ENCODE measurements at regions of chr2 and their contacts with region 1.

Region 1: DNA sequence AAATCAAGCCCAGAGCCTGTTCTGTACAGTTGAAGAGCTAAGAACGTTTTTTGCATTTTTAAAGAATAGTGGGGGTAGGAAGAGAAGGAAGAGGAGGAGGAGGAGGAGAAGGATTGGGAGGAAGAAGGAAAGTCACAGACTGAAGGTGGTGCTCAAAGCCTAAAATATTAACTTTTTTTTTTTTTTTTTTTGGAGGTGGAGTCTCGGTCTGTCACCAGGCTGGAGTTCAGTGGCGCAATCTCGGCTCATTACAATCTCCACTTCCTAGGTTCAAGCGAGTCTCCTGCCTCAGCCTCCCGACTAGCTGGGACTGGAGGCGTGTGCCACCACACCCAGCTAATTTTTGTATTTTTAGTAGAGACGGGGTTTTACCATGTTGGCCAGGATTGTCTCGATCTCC is 18.3 kb upstream of the KLHL29 start:
- DNase-seq: no peak
- ATAC-seq: peak; percentile 84
- H3K4me3 ChIP-seq: peak overlapping the region; percentile 32 to 43
- H3K27ac ChIP-seq: no peak overlapping the region
- H3K4me1 ChIP-seq: peaks cover 3 to 14% of the 10 kb centered on the region in 2 experiments; a peak in 3 of 4 replicates
- H3K27me3 ChIP-seq: peaks cover 19% of the 10 kb centered on the region; the same call in 1 of the 2 replicates
- CTCF ChIP-seq: peak; percentile 2 to 52 (median 28); a peak in 2 of 6 replicates
- POLR2A ChIP-seq: no peak
- RAD21 ChIP-seq: peak; percentile 74

Region 2: GRCh38 chr2:23028106-23028505 is 338.6 kb before region 1 on chr2:
- CTCF ChIA-PET with region 1: no interaction called
- POLR2A ChIA-PET with region 1: no interaction called
- RAD21 ChIA-PET with region 1: no interaction called
- intact Hi-C with region 1: no loop called
- DNase-seq: no peak
- ATAC-seq: no peak
- H3K4me3 ChIP-seq: no peak overlapping the region
- H3K27ac ChIP-seq: no peak overlapping the region
- H3K4me1 ChIP-seq: no peaks in the 10 kb centered on the region
- H3K27me3 ChIP-seq: peaks cover 14% of the 10 kb centered on the region; the same call in 1 of the 2 replicates
- CTCF ChIP-seq: no peak
- POLR2A ChIP-seq: no peak
- RAD21 ChIP-seq: no peak

Region 3: DNA sequence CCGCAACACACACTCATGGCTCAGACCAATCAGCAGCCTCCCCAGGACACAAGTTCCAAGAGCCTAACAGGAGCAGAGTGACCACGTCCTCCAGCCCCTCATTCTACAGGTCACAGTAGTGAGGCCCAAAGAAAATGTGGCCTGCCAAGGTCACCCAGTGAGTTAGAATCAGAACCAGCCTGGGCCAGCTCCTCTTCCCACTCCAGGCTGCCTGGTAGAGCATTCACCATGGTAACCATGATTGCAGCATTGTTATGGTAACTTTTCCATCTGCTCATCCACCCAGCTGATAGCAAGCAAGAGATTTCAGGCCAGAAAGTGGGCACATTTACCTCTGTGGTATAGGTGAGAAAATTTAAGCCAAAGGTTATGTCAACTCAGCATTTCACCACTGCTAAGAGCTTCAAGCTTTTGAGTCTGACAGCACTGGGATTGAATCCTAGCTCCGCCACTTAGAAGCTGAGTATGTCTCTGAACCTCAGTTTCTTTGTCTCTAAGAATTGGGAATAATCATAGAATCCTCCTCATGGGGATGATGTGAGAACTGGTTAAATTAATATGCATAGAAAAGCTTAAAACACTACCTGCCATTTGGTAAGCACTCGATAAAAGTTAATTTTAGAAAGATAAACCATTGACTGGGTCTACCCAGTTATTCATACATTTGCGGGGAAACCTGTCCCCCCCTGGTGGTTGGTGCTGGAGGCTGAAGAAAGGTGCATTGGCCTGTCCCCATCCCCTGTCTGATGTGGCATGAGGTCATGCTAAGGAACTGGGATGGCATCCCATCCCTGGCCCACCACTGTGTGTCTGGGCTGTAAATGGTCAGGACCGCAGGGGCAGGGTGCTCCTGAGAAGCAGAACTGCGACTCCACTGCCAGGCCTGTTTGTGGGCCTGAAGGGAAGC is 199.8 kb after region 1 on chr2:
- CTCF ChIA-PET with region 1: no interaction called
- POLR2A ChIA-PET with region 1: no interaction called
- RAD21 ChIA-PET with region 1: no interaction called
- intact Hi-C with region 1: loop called (anchors 5 kb)
- DNase-seq: no peak
- ATAC-seq: peak; percentile 88
- H3K4me3 ChIP-seq: no peak overlapping the region
- H3K27ac ChIP-seq: no peak overlapping the region
- H3K4me1 ChIP-seq: no peaks in the 10 kb centered on the region
- H3K27me3 ChIP-seq: no peaks in the 10 kb centered on the region
- CTCF ChIP-seq: peak; percentile 50 to 74 (median 71); a peak in 5 of 6 replicates
- POLR2A ChIP-seq: no peak
- RAD21 ChIP-seq: peak; percentile 61

Region 4: GRCh38 chr2:23606968-23607367 is 240.2 kb after region 1 on chr2:
- CTCF ChIA-PET with region 1: no interaction called
- POLR2A ChIA-PET with region 1: no interaction called
- RAD21 ChIA-PET with region 1: no interaction called
- intact Hi-C with region 1: no loop called
- DNase-seq: no peak
- ATAC-seq: no peak
- H3K4me3 ChIP-seq: no peak overlapping the region
- H3K27ac ChIP-seq: no peak overlapping the region
- H3K4me1 ChIP-seq: 0 out of 4 replicates have a peak, but pooled peaks cover 0 to 3% of the 10 kb centered on the region in 2 experiments
- H3K27me3 ChIP-seq: no peaks in the 10 kb centered on the region
- CTCF ChIP-seq: no peak
- POLR2A ChIP-seq: no peak
- RAD21 ChIP-seq: no peak

Region 5: DNA sequence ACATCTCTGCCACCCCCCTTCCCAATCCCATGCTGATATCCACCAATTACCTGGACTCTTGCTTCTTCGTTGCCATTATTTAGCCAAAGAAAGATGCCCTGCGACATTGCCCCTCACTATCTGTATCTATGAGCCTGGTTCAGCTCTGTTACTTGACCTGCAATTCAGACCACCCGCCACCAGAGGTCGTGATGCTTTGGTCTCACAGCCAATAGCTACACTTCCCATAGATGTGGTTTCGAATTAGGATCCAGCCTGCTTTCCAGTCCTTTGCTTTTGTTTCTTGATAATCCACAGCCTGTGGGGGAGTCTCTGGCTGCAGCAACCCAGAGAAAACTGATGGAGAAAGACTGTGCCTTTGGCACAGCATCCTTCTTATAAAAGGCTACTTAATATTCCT is 257.7 kb after region 1 on chr2:
- CTCF ChIA-PET with region 1: no interaction called
- POLR2A ChIA-PET with region 1: no interaction called
- RAD21 ChIA-PET with region 1: no interaction called
- intact Hi-C with region 1: no loop called
- DNase-seq: peak; percentile 13
- ATAC-seq: peak; percentile 81
- H3K4me3 ChIP-seq: no peak overlapping the region
- H3K27ac ChIP-seq: no peak overlapping the region
- H3K4me1 ChIP-seq: no peaks in the 10 kb centered on the region
- H3K27me3 ChIP-seq: no peaks in the 10 kb centered on the region
- CTCF ChIP-seq: peak in 2 of 3 experiments; percentile 72 to 87; a peak in 4 of 6 replicates
- POLR2A ChIP-seq: no peak
- RAD21 ChIP-seq: no peak

Region 6: DNA sequence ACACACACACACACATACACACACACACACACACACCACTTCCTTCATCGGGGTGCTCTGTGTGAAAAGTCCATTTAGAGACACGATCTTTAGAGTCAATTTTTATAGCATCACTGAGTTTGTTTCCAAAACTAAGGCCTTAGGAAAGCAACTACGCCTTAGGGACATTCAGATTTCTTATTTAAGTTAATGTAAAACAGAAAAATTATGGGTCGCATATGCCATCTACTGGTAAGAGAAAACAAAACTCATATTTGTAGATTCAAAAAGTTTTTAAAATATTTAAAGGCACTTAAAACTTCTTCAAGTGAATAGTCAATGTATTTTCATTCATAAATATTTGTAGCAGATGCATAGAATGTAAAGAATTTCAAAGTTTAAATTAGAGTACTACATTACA is 394.0 kb after region 1 on chr2:
- CTCF ChIA-PET with region 1: no interaction called
- POLR2A ChIA-PET with region 1: no interaction called
- RAD21 ChIA-PET with region 1: no interaction called
- intact Hi-C with region 1: loop called (anchors 5 kb)
- DNase-seq: peak; percentile 18
- ATAC-seq: no peak
- H3K4me3 ChIP-seq: no peak overlapping the region
- H3K27ac ChIP-seq: no peak overlapping the region
- H3K4me1 ChIP-seq: peaks cover 0 to 10% of the 10 kb centered on the region in 2 experiments; a peak in 2 of 4 replicates
- H3K27me3 ChIP-seq: no peaks in the 10 kb centered on the region
- CTCF ChIP-seq: peak; percentile 10 to 45 (median 15); a peak in 2 of 6 replicates
- POLR2A ChIP-seq: no peak
- RAD21 ChIP-seq: peak; percentile 44

Measured in HCT116 (cell line).